Right ventricle myocardium inferior (tissue), 1 donor: ENCODE measurements at regions of chr2 and their contacts with region 1.

Region 1: DNA sequence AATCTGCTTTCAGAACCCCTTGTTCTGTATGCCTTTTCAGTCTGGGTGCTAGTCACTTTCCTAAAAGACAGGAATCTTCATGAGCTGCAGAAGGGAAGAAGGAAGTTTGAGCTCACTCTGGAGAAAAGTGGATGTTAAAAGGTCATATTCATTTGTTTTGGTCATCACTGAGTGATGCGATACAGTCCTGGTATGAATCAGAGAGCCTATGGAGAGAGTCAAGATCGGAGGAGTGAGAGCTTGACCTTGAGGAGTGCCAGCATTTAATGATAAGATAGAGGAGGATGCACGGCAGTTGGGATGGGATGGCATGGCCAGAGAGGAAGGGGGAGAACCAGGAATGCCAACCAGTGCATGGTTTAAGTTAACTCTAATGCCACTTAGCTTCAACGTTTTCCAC is 19.6 kb downstream of the USP39 start:
- DNase-seq: no peak
- ATAC-seq: no peak

Region 2: GRCh38 chr2:85813982-85814801 is 178.6 kb after region 1 on chr2:
- intact Hi-C with region 1: loop called (anchors 5 kb)
- DNase-seq: peak; percentile 95
- ATAC-seq: peak; percentile 98

Region 3: GRCh38 chr2:86105252-86105968 is 469.8 kb after region 1 on chr2 and contains the start of gene POLR1A:
- intact Hi-C with region 1: loop called (anchors 10 kb)
- DNase-seq: peak; percentile 92
- ATAC-seq: peak; percentile 96
- total RNA-seq, gene POLR1A: 12.8 TPM